CD4-positive, alpha-beta memory T cell (primary cell): ENCODE measurements at regions of chr12 and their contacts with region 1.

Region 1: DNA sequence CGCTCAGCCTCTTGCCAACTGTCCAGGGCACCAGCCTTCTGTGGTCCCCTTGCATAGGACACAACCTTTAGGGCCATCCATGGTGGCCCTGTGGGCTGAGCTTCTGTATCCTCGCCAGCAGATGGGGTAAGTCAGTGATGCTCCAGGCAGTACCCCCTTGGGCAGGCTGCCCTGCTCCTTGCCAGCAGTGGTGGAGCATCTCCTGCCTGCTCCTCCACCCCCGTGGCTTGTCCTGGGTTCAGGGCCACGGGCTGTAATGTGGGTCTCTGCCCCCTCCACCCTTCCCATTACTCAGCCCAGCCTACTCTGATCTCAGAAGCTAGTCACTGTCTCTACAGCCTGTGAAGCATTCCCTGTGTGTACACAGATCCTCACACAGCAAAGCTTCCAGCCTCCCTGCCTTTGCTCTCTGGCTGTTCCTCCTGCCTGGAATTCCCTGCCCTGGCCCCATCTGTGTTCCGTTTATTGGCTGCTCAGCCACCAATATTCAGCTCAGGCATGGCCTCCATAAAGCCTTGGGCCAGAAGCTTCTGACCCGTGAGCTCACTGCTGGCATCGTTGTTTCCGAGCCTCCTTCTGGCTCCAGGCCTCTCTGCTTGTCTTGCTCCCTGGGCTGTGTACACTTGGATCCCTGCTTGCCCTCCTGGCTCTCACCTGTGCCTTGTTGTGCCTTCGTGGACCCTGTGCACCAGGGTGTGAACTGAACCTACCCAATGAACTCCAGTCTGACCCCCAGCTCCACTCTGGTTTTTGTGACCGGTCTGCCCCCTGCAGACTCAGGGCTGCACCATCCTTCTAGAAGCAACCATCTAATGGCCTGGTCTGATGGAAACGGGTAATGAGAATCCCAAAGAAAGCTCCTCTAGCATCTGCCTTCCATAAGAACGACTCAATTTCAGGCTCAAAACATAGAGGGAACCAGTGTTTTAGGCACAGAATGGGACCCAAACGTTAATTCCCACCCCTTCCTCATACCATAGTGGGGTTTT is 177.0 kb upstream of the PRMT8 start:
- DNase-seq: peak in 4 of 5 donors; percentile 4 to 13 (median 7)
- H3K4me3 ChIP-seq: no peak overlapping the region
- H3K4me3 Mint-ChIP-seq: no peak overlapping the region
- H3K27ac ChIP-seq: no peak overlapping the region
- H3K27ac Mint-ChIP-seq: peak overlapping the region in 1 of 7 donors; percentile 71
- H3K4me1 ChIP-seq: no peaks in the 10 kb centered on the region
- H3K4me1 Mint-ChIP-seq: no peaks in the 10 kb centered on the region
- H3K27me3 ChIP-seq: no peaks in the 10 kb centered on the region
- H3K27me3 Mint-ChIP-seq: peaks cover 9 to 17% of the 10 kb centered on the region in 2 donors

Region 2: DNA sequence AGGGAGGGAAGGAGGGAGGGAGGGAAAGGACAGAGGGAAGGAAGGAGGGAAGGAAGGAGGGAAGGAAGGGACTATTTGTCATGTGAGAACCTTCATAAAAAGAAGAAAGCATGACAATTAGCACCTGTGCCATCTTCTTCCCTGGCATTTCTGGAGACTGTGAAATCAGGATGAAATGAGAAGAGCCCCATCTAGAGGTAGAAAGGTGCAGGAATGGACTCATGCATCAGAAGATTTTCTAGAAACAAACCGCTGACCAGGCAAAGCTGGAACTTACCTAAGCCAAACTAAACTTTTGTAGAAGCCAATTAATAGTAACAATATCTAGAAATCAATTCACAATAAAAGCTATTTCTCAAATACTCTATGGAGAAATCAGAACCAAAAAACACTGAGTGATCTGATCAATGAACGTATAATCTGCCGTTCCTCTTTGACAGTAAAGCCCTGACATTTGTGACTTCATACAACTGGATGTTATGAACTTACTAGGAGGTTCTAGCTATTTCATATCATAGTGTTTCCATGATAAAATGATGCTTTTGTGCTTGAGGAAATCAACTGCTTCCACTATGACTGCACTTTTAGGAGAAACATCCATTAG is 463.3 kb after region 1 on chr12:
- CTCF ChIA-PET with region 1: interaction called, 5 read pairs
- POLR2A ChIA-PET with region 1: no interaction called
- intact Hi-C with region 1: loop called (anchors 1 kb)
- DNase-seq: peak in 4 of 5 donors; percentile 37 to 45 (median 42)
- H3K4me3 ChIP-seq: no peak overlapping the region
- H3K4me3 Mint-ChIP-seq: no peak overlapping the region
- H3K27ac ChIP-seq: no peak overlapping the region
- H3K27ac Mint-ChIP-seq: no peak overlapping the region
- H3K4me1 ChIP-seq: peaks cover 5% of the 10 kb centered on the region
- H3K4me1 Mint-ChIP-seq: peaks cover 4 to 6% (median 5%) of the 10 kb centered on the region in 4 donors
- H3K27me3 ChIP-seq: no peaks in the 10 kb centered on the region
- H3K27me3 Mint-ChIP-seq: no peaks in the 10 kb centered on the region

Region 3: GRCh38 chr12:3803865-3804472 is 490.0 kb after region 1 on chr12:
- CTCF ChIA-PET with region 1: interaction called, 10 read pairs
- POLR2A ChIA-PET with region 1: no interaction called
- intact Hi-C with region 1: no loop called
- DNase-seq: peak; percentile 54 to 60 (median 59)
- H3K4me3 ChIP-seq: no peak overlapping the region
- H3K4me3 Mint-ChIP-seq: no peak overlapping the region
- H3K27ac ChIP-seq: no peak overlapping the region
- H3K27ac Mint-ChIP-seq: peak overlapping the region in 1 of 7 donors; percentile 9
- H3K4me1 ChIP-seq: no peaks in the 10 kb centered on the region
- H3K4me1 Mint-ChIP-seq: peaks cover 0 to 3% (median 2%) of the 10 kb centered on the region in 4 donors
- H3K27me3 ChIP-seq: no peaks in the 10 kb centered on the region
- H3K27me3 Mint-ChIP-seq: no peaks in the 10 kb centered on the region